ENCODE measurements at regions of chr6 and their contacts with region 1.

Region 1: DNA sequence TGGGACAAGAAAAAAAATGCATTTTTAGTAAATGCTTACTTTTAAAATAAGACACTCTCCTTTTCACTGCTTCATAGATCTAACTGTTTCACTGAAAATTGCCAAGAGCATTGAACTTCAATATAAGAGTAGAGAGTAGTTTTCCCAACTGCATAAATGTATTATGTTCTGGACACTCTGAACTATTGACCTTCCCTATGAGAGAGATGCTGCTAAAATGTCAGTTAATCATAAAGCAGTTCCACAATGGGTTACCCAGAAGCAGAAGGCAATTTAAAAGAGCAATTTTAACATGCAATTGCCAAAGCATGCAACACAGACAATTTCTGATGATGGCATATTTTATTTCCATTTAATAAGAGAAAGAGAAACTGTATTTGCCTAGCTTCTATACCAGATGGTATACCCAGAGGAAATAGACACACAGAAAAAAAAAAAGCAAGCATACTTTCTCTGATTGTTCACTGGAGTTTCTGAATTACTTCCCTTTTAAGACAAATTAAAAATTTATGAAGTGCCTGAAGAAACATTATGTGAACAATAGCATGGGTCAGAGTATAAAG is 279.1 kb upstream of the THEMIS start:
- DNase-seq: no peak
- H3K4me3 ChIP-seq: no peak overlapping the region
- H3K27ac ChIP-seq: no peak overlapping the region
- H3K4me1 ChIP-seq: no peaks in the 10 kb centered on the region
- H3K27me3 ChIP-seq: no peaks in the 10 kb centered on the region
- CTCF ChIP-seq: no peak

Region 2: GRCh38 chr6:128068116-128068479 is 111.9 kb before region 1 on chr6:
- intact Hi-C with region 1: loop called (anchors 10 kb)
- DNase-seq: no peak
- H3K4me3 ChIP-seq: no peak overlapping the region
- H3K27ac ChIP-seq: no peak overlapping the region
- H3K4me1 ChIP-seq: no peaks in the 10 kb centered on the region
- H3K27me3 ChIP-seq: no peaks in the 10 kb centered on the region
- CTCF ChIP-seq: no peak

Region 3: DNA sequence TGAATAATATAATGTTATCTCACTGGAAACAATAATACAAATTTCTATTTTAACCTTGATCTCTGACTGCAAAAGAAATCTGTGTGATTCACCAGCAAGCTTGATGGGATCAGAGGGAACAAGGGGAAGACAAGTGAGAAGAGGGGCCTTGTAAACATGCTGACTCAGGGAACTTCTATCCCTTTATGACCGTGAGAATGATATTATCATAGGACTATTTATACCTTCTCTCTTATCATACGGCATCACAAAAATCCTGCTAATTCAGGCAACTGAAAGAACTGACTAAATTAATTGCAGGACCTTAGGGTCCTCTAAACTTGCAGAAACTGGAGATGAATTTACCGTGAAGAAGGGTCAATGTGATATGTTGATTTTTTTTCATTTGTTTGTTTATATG is 167.2 kb after region 1 on chr6:
- intact Hi-C with region 1: no loop called
- DNase-seq: no peak
- H3K4me3 ChIP-seq: no peak overlapping the region
- H3K27ac ChIP-seq: no peak overlapping the region
- H3K4me1 ChIP-seq: no peaks in the 10 kb centered on the region
- H3K27me3 ChIP-seq: no peaks in the 10 kb centered on the region
- CTCF ChIP-seq: no peak

Measured in colonic mucosa (tissue), 4 donors.